ENCODE measurements at regions of chr21 and their contacts with region 1.

Region 1: GRCh38 chr21:41229509-41230248 is 61.7 kb downstream of the BACE2 start:
- DNase-seq: no peak
- H3K4me3 ChIP-seq: no peak overlapping the region
- H3K4me3 Mint-ChIP-seq: no peak overlapping the region
- H3K27ac Mint-ChIP-seq: no peak overlapping the region
- H3K4me1 ChIP-seq: no peaks in the 10 kb centered on the region; the same call in 1 of the 2 replicates
- H3K4me1 Mint-ChIP-seq: peaks cover 8% of the 10 kb centered on the region
- H3K27me3 ChIP-seq: no peaks in the 10 kb centered on the region
- H3K27me3 Mint-ChIP-seq: no peaks in the 10 kb centered on the region
- CTCF ChIP-seq: no peak

Region 2: GRCh38 chr21:41207401-41208068 is 22.1 kb before region 1 on chr21:
- CTCF ChIA-PET with region 1: no interaction called
- POLR2A ChIA-PET with region 1: no interaction called
- intact Hi-C with region 1: loop called (anchors 1 kb)
- DNase-seq: no peak
- H3K4me3 ChIP-seq: no peak overlapping the region
- H3K4me3 Mint-ChIP-seq: no peak overlapping the region
- H3K27ac Mint-ChIP-seq: no peak overlapping the region
- H3K4me1 ChIP-seq: no peaks in the 10 kb centered on the region
- H3K4me1 Mint-ChIP-seq: no peaks in the 10 kb centered on the region
- H3K27me3 ChIP-seq: 0 out of 2 replicates have a peak, but pooled peaks cover 1% of the 10 kb centered on the region
- H3K27me3 Mint-ChIP-seq: peaks cover 3% of the 10 kb centered on the region
- CTCF ChIP-seq: no peak

Region 3: GRCh38 chr21:41247561-41248284 is 18.0 kb after region 1 on chr21:
- CTCF ChIA-PET with region 1: no interaction called
- POLR2A ChIA-PET with region 1: no interaction called
- intact Hi-C with region 1: no loop called
- DNase-seq: no peak
- H3K4me3 ChIP-seq: no peak overlapping the region
- H3K4me3 Mint-ChIP-seq: no peak overlapping the region
- H3K27ac Mint-ChIP-seq: no peak overlapping the region
- H3K4me1 ChIP-seq: no peaks in the 10 kb centered on the region
- H3K4me1 Mint-ChIP-seq: peaks cover 12% of the 10 kb centered on the region
- H3K27me3 ChIP-seq: no peaks in the 10 kb centered on the region
- H3K27me3 Mint-ChIP-seq: no peaks in the 10 kb centered on the region
- CTCF ChIP-seq: no peak

Measured in Caco-2 (cell line).